ENCODE measurements at regions of chr6 and their contacts with region 1.

Region 1: DNA sequence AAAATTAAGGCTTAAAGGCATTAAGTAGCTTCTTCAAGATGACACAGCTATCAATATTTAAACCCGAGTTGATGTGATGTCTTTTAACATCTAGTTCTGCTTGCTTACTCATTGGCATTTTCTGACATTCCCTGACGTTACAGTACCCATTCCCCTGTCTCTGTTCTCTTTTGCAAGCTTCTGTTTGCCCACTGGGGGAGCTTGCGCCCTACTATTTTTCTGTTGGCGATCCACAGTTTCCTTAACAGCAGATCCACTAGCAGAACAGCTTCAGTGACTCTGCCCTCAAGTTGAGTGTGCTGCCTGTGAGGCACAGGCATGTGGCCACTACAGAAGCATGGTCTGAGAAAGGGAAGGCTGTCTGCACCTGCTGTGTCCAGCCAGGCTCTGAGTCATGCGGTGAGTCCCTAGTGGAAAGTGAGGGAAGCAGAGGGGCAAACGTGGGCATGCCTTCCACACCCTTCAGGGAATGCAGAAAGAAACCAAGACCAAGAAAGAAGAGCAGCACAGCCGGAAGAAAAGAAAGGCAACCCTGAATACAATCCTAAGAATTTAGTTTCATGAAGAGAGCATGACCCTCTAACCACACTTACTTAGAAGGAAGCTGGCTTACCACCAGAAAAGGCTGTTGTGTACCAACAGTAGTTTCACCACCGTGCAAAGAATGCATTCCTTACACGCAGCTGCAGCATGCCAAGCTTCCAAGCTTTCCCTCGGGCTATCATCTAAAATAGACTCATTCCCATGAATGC is 97.7 kb upstream of the VGLL2 start:
- DNase-seq: no peak
- H3K4me3 ChIP-seq: no peak overlapping the region
- H3K27ac ChIP-seq: no peak overlapping the region
- H3K4me1 ChIP-seq: no peaks in the 10 kb centered on the region
- H3K27me3 ChIP-seq: no peaks in the 10 kb centered on the region
- CTCF ChIP-seq: peak; percentile 6 to 55 (median 44)
- EP300 ChIP-seq: no peak
- POLR2A ChIP-seq: no peak
- RAD21 ChIP-seq: peak; percentile 56 to 62

Region 2: DNA sequence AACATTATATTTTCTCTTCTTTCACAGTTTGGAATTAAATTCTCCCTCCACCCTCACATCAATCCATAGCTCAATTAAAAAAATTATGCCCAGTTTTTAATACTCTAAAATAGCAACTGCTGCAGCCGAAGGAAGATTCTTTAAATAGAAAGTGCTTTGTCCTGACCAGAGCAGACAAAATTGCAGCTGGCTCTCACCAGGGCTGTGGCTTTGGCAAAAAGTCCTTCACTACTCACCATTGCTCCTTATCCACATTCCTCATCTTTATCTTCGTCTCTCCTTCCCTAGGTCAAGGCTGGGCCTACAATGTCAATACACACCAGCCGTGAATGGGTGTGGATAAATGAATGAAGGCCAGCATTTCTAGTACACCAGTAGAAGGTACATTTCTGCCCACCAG is 10.2 kb before region 1 on chr6:
- CTCF ChIA-PET with region 1: interaction called, 22 read pairs
- POLR2A ChIA-PET with region 1: no interaction called
- DNase-seq: no peak
- H3K4me3 ChIP-seq: no peak overlapping the region
- H3K27ac ChIP-seq: no peak overlapping the region
- H3K4me1 ChIP-seq: no peaks in the 10 kb centered on the region
- H3K27me3 ChIP-seq: no peaks in the 10 kb centered on the region
- CTCF ChIP-seq: no peak
- EP300 ChIP-seq: no peak
- POLR2A ChIP-seq: no peak
- RAD21 ChIP-seq: no peak